ENCODE measurements at regions of chr7 and their contacts with region 1.

Region 1: DNA sequence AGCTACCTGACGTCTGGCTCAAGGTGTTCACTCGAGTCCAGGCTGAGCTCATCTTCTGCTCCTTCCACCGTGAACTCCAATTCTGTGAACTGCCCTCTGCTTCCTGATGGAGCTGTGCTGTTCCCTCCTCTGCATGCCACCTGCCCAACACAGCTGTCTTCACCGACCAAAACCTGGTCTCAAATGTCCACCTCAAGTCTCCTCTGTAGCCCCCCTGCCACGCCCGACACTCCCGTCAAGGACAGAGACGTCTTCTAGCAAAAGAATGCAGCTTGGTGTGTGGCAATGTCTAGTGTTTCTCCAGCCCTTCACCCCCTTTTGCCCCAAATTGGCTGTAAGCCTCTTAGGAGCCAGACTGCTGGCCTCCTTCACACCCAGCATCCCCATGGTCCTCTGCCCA is 305.1 kb downstream of the DNAJB6 start:
- DNase-seq: no peak
- ATAC-seq: no peak
- H3K4me3 ChIP-seq: no peak overlapping the region
- H3K27ac ChIP-seq: no peak overlapping the region
- H3K4me1 ChIP-seq: no peaks in the 10 kb centered on the region
- H3K27me3 ChIP-seq: no peaks in the 10 kb centered on the region
- CTCF ChIP-seq: no peak

Region 2: GRCh38 chr7:157502701-157503111 is 139.2 kb before region 1 on chr7:
- CTCF ChIA-PET with region 1: no interaction called
- POLR2A ChIA-PET with region 1: no interaction called
- in situ Hi-C with region 1: no loop called
- intact Hi-C with region 1: no loop called
- DNase-seq: no peak
- ATAC-seq: no peak
- H3K4me3 ChIP-seq: peak overlapping the region in 1 of 2 experiments; percentile 1; a peak in 1 of 4 replicates
- H3K27ac ChIP-seq: no peak overlapping the region
- H3K4me1 ChIP-seq: no peaks in the 10 kb centered on the region
- H3K27me3 ChIP-seq: peaks cover 6% of the 10 kb centered on the region; the same call in 1 of the 2 replicates
- CTCF ChIP-seq: no peak

Region 3: DNA sequence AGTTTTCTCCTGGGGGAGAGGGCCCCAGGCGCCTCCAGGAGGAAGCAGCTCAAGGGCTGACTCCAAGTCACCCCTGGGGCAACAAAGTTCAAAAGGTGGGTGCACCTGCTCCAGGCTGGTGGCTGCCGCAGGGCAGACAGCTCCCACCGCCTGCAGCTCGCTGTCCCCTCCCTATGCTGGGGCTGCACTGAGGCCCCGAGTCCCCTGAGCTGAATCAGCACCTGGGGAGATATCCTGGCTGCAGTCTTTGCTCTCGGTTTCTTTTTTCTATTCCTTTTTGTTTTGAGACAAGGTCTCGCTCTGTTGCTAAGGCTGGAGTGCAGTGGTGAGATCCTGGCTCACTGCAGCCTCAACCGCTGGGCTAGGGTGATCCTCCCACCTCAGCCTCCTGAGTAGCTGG is 121.6 kb before region 1 on chr7:
- CTCF ChIA-PET with region 1: no interaction called
- POLR2A ChIA-PET with region 1: no interaction called
- in situ Hi-C with region 1: no loop called
- intact Hi-C with region 1: no loop called
- DNase-seq: no peak
- ATAC-seq: no peak
- H3K4me3 ChIP-seq: no peak overlapping the region
- H3K27ac ChIP-seq: no peak overlapping the region
- H3K4me1 ChIP-seq: no peaks in the 10 kb centered on the region; the same call in 1 of the 2 replicates
- H3K27me3 ChIP-seq: no peaks in the 10 kb centered on the region
- CTCF ChIP-seq: no peak

Region 4: GRCh38 chr7:157587051-157587804 is 54.6 kb before region 1 on chr7:
- CTCF ChIA-PET with region 1: no interaction called
- POLR2A ChIA-PET with region 1: interaction called, 16 read pairs
- in situ Hi-C with region 1: no loop called
- intact Hi-C with region 1: no loop called
- DNase-seq: no peak
- ATAC-seq: no peak; the same call in 1 of the 2 replicates
- H3K4me3 ChIP-seq: no peak overlapping the region
- H3K27ac ChIP-seq: no peak overlapping the region
- H3K4me1 ChIP-seq: no peaks in the 10 kb centered on the region
- H3K27me3 ChIP-seq: no peaks in the 10 kb centered on the region
- CTCF ChIP-seq: no peak

Measured in Panc1 (cell line).